ENCODE measurements at regions of chr10 and their contacts with region 1.

Region 1: DNA sequence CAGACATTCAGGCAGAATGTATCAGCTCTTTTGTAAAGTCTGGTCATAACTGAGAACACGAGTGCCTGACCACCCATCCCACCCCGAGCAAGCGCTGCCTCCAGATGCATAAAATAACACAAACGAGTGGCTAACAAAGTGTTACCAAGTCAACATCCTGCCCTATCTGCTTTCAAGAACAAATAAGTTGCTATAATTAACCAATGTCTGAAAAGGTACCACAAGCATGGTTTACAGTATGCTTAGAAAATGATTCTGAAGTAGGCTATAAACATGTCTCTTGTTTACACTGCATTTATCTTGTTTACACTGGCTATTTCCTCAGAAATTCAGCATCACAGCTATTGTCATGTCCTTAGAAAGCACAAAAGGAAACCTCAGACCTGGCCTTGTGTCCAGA is 49.5 kb downstream of the PIK3AP1 start:
- DNase-seq: peak; percentile 57 to 59
- ATAC-seq: peak; percentile 54 to 81 (median 78)
- H3K4me3 ChIP-seq: no peak overlapping the region
- H3K4me3 Mint-ChIP-seq: peak overlapping the region; percentile 85
- H3K27ac ChIP-seq: peak overlapping the region; percentile 94
- H3K27ac Mint-ChIP-seq: peak overlapping the region; percentile 98 to 99
- H3K4me1 ChIP-seq: peaks cover 79% of the 10 kb centered on the region
- H3K4me1 Mint-ChIP-seq: peaks cover 70 to 77% of the 10 kb centered on the region in 2 donors
- H3K27me3 ChIP-seq: no peaks in the 10 kb centered on the region
- H3K27me3 Mint-ChIP-seq: no peaks in the 10 kb centered on the region
- CTCF ChIP-seq: no peak

Region 2: DNA sequence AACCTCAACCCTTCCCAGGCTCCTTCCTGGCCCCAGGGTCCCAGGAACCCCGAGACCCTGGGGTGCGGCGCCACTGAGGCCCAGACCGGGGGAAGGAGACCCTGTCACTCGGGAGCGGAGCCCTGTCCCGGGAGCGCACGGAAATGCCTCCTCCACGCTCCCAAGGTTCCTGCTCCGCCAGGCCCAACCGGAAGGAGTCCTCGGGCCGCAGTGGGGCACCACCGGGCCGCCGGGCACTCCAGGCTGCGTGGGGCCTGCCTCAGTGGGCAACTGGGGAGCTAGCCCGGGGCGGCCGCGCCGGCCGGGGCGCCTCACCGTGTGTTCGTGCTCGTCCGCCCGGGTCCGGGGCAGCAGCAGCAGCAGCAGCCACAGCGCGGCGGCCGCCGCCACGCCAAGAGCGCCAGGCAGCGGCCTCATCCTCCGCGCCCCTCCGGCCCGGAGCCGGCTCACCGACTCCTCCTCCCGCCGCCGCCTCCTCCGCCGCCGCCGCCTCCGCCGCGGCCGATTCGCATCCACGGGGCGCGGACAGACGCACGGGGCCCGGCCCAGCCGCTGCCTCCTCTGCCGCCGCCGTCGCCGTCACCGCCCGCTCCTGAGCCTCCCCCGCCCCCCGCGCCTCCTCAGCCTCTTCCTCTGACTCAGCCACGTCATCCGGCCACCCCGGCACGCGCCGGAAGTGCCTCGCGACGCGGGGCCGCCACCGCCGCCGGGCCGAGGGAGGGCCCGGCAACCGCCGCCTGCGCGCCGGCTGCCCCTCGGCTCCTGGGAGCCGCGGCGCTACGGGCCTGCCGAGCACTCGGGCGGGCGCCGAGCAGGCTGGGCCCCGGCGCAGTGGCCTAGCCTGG is 84.1 kb before region 1 on chr10 and contains the start of gene TM9SF3:
- intact Hi-C with region 1: loop called (anchors 2 kb)
- DNase-seq: peak; percentile 90 to 96
- ATAC-seq: peak; percentile 82 to 95 (median 88)
- H3K4me3 ChIP-seq: peak within 1 kb of the TSS; percentile 96
- H3K4me3 Mint-ChIP-seq: peak within 1 kb of the TSS; percentile 97
- H3K27ac ChIP-seq: peak within 1 kb of the TSS; percentile 99
- H3K27ac Mint-ChIP-seq: peak within 1 kb of the TSS in 1 of 2 donors; percentile 97
- H3K4me1 ChIP-seq: peaks cover 21% of the 10 kb centered on the region
- H3K4me1 Mint-ChIP-seq: peaks cover 31 to 39% of the 10 kb centered on the region in 2 donors
- H3K27me3 ChIP-seq: no peaks in the 10 kb centered on the region
- H3K27me3 Mint-ChIP-seq: no peaks in the 10 kb centered on the region
- CTCF ChIP-seq: no peak
- total RNA-seq, gene TM9SF3: 113 to 119 (median 117) TPM

Region 3: GRCh38 chr10:96618653-96619052 is 52.1 kb before region 1 on chr10:
- intact Hi-C with region 1: no loop called
- DNase-seq: no peak
- ATAC-seq: no peak
- H3K4me3 ChIP-seq: no peak overlapping the region
- H3K4me3 Mint-ChIP-seq: no peak overlapping the region
- H3K27ac ChIP-seq: no peak overlapping the region
- H3K27ac Mint-ChIP-seq: no peak overlapping the region
- H3K4me1 ChIP-seq: no peaks in the 10 kb centered on the region
- H3K4me1 Mint-ChIP-seq: peaks cover 0 to 24% of the 10 kb centered on the region in 2 donors
- H3K27me3 ChIP-seq: no peaks in the 10 kb centered on the region
- H3K27me3 Mint-ChIP-seq: no peaks in the 10 kb centered on the region
- CTCF ChIP-seq: no peak

Region 4: DNA sequence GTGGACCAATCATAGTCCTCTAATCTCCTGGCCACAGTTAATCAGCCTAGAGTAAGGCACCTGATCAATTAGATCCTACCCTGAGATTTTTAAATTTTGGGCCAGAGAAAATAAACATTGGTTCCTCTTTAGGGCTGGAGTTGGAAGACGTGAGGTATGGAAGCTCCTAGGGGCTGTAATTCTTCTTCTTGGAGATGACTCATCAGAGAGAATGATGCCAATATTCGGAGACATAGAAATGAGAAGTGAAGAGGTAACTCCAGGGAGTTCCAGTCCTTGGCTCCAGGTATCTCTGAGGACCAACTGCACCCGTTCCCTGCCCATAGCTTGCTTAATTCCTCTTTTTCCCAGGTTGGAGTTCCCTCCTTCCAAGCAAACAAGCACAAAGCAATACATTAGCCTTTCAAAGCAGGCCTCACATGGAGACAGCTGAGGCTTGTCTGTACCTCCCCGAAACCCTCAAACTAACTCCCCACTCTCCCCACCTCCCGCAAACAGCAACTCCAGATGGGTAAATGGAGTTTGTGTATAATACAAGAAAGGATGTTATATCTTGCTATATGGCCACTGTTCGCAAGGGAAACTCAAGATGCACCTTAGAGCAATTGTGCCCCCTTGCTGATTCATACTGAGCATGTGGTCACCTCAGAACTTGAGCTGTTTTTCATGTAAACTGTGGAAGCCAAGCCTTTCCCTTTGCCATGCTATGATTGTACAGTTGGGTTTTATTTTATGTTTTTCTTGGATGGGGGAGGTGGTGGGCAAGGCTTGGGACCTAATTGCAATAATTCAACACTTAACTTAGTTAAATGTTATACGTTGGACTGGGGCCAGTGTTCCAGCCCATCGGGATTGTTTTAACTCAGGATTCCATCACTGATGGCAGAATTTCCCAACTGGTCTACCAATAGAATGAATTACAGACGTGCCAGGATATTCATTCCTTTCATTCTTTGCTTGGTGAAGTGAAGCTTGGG is 20.3 kb after region 1 on chr10:
- intact Hi-C with region 1: loop called (anchors 2 kb)
- DNase-seq: peak in 1 of 2 donors; percentile 30
- ATAC-seq: no peak
- H3K4me3 ChIP-seq: no peak overlapping the region
- H3K4me3 Mint-ChIP-seq: peak overlapping the region; percentile 2
- H3K27ac ChIP-seq: no peak overlapping the region
- H3K27ac Mint-ChIP-seq: peak overlapping the region; percentile 56 to 98
- H3K4me1 ChIP-seq: peaks cover 61% of the 10 kb centered on the region
- H3K4me1 Mint-ChIP-seq: peaks cover 80 to 84% of the 10 kb centered on the region in 2 donors
- H3K27me3 ChIP-seq: no peaks in the 10 kb centered on the region
- H3K27me3 Mint-ChIP-seq: no peaks in the 10 kb centered on the region
- CTCF ChIP-seq: peak; percentile 13